PC-3 (cell line): ENCODE measurements at regions of chr1 and their contacts with region 1.

Region 1: GRCh38 chr1:239898062-239898730 is 193.5 kb upstream of the FMN2 start:
- DNase-seq: peak; percentile 94
- ATAC-seq: peak; percentile 84
- H3K4me3 ChIP-seq: no peak overlapping the region
- H3K27ac ChIP-seq: no peak overlapping the region
- H3K4me1 ChIP-seq: peaks cover 15% of the 10 kb centered on the region
- H3K27me3 ChIP-seq: no peaks in the 10 kb centered on the region
- CTCF ChIP-seq: peak; percentile 99

Region 2: DNA sequence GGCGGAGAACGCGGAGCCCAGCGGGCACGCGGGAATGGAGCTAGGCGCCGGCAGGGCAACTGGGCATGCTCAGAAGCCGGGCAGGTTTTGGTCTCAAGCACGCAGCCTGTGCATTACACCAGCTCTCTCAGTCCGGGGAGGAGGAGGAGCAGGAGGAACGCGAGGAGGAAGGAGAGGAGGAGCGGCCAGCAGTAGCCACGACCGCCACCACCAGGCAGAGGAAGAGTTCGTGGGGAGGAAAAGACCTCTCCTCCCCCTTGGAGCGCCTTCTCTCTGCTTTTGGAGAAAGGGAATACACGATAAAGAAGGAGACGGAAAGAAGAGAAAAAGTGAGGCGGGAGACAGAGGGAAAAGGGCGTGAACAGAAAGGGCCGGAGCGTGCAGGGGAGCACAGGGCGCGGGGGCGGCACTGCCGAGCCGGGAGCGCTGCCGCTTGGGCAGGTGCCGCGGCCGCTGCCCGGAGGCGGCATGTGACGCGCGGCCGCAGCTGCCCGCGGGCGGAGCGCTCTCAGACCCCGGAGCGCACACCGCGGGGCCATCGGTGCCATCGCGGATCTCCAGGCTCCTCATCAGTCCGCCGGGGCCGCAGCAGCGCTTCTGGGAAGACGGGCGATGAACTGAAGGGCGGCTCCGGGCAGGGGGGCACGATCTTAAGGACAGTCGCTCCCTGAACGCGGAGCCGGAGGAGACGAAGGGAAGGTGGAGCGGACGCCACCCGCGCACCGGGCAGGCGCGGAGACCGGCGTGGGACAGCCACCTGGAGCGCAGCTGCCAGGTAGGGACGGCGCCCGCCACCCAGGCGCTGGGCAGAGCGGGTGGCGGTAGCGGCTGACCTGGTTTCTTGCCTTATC is 511.5 kb before region 1 on chr1 and contains the start of gene CHRM3:
- CTCF ChIA-PET with region 1: interaction called, 4 read pairs
- POLR2A ChIA-PET with region 1: no interaction called
- intact Hi-C with region 1: loop called (anchors 5 kb)
- DNase-seq: peak; percentile 90
- ATAC-seq: peak; percentile 82
- H3K4me3 ChIP-seq: peak within 1 kb of the TSS; percentile 76
- H3K27ac ChIP-seq: 0 out of 2 replicates have a peak within 1 kb of the TSS, but pooled peaks have one; percentile 9
- H3K4me1 ChIP-seq: peaks cover 15% of the 10 kb centered on the region; the same call in 1 of the 2 replicates
- H3K27me3 ChIP-seq: peaks cover 30% of the 10 kb centered on the region
- CTCF ChIP-seq: peak; percentile 60
- total RNA-seq, gene CHRM3: 1.2 and 3.5 TPM in 2 replicates

Region 3: DNA sequence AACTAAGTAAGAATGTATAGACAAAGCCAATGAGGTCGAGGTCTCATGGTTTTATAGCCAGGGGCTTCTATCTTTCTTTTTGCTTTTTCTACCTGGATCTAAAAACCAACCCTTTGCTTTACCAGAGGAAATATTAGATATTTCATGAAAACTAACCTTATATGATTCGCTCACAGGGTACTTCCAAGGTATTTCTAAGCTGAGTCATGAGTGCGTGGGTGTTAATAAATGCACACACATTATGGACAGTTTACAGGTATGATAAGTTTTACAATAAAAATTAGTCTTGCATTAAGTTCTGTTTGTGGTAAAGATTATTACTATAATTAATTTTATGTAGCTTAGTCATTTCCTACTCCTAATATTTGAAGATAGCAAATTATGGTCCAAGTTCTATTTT is 294.7 kb before region 1 on chr1:
- CTCF ChIA-PET with region 1: interaction called, 6 read pairs
- POLR2A ChIA-PET with region 1: no interaction called
- intact Hi-C with region 1: loop called (anchors 5 kb)
- DNase-seq: peak; percentile 68
- ATAC-seq: peak; percentile 53
- H3K4me3 ChIP-seq: no peak overlapping the region
- H3K27ac ChIP-seq: peak overlapping the region; percentile 45
- H3K4me1 ChIP-seq: peaks cover 51% of the 10 kb centered on the region
- H3K27me3 ChIP-seq: no peaks in the 10 kb centered on the region
- CTCF ChIP-seq: no peak

Region 4: GRCh38 chr1:239719642-239720258 is 178.4 kb before region 1 on chr1:
- CTCF ChIA-PET with region 1: no interaction called
- POLR2A ChIA-PET with region 1: no interaction called
- intact Hi-C with region 1: loop called (anchors 10 kb)
- DNase-seq: no peak
- ATAC-seq: no peak
- H3K4me3 ChIP-seq: no peak overlapping the region
- H3K27ac ChIP-seq: no peak overlapping the region
- H3K4me1 ChIP-seq: peaks cover 18% of the 10 kb centered on the region
- H3K27me3 ChIP-seq: no peaks in the 10 kb centered on the region
- CTCF ChIP-seq: no peak

Region 5: GRCh38 chr1:239858058-239858457 is 40.1 kb before region 1 on chr1:
- CTCF ChIA-PET with region 1: interaction called, 5 read pairs
- POLR2A ChIA-PET with region 1: no interaction called
- intact Hi-C with region 1: loop called (anchors 2 kb)
- DNase-seq: peak; percentile 93
- ATAC-seq: peak; percentile 97
- H3K4me3 ChIP-seq: peak overlapping the region; percentile 53
- H3K27ac ChIP-seq: peak overlapping the region; percentile 57
- H3K4me1 ChIP-seq: peaks cover 18% of the 10 kb centered on the region
- H3K27me3 ChIP-seq: no peaks in the 10 kb centered on the region
- CTCF ChIP-seq: no peak